Thyroid gland (tissue), 4 donors: ENCODE measurements at regions of chr15 and their contacts with region 1.

Region 1: GRCh38 chr15:59917504-59918157 is 86.5 kb upstream of the FOXB1 start:
- DNase-seq: peak; percentile 73 to 77
- H3K4me3 ChIP-seq: no peak overlapping the region
- H3K27ac ChIP-seq: no peak overlapping the region
- H3K4me1 ChIP-seq: no peaks in the 10 kb centered on the region
- H3K27me3 ChIP-seq: no peaks in the 10 kb centered on the region
- CTCF ChIP-seq: peak in 4 of 6 experiments; percentile 56 to 70 (median 63)
- POLR2A ChIP-seq: no peak

Region 2: GRCh38 chr15:59792359-59792758 is 125.3 kb before region 1 on chr15:
- intact Hi-C with region 1: no loop called
- DNase-seq: no peak
- H3K4me3 ChIP-seq: no peak overlapping the region
- H3K27ac ChIP-seq: no peak overlapping the region
- H3K4me1 ChIP-seq: no peaks in the 10 kb centered on the region
- H3K27me3 ChIP-seq: no peaks in the 10 kb centered on the region
- CTCF ChIP-seq: no peak
- POLR2A ChIP-seq: no peak

Region 3: GRCh38 chr15:60179786-60180391 is 262.3 kb after region 1 on chr15:
- intact Hi-C with region 1: loop called (anchors 5 kb)
- DNase-seq: peak; percentile 32 to 35
- H3K4me3 ChIP-seq: no peak overlapping the region
- H3K27ac ChIP-seq: no peak overlapping the region
- H3K4me1 ChIP-seq: peaks cover 3 to 5% of the 10 kb centered on the region in 2 donors
- H3K27me3 ChIP-seq: no peaks in the 10 kb centered on the region
- CTCF ChIP-seq: peak; percentile 57 to 84 (median 76)
- POLR2A ChIP-seq: no peak

Region 4: DNA sequence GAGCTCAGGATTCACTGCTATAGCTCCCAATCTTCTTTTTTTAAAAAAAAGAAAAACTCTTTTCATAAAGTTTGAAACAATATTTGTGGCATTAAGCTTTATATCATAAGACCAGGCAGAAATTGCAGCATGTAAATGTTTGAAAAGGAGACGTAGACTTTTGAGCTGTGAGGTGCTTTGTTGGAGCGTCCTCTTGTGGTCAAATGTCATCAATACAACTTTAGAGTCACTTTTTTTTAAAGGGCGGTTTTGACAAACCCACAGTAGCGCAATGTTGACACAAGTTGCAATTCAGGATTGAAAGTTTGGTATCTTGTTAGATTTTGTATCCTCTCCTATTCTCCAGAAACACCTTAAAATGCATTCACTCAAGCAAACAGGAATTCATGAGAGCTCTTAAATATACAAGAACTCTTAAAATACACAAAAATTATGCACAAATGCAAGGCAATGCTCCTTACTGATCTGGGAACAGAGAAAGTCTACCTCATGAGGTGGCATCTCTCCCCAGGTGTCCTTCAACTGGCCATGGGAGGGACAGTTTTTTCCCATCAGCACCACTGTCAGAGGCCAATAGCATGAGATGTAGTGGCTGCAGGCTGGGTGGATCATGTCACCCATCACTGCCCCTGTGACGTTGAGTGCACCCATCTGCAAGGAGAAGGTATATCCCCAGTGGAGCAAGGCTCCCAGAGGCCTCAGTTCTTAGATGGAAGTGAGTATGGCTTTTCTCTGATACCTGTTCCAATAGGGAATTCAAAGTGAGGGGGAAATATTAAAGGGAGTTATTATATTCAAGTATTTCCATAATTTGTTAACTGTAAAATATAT is 409.4 kb after region 1 on chr15:
- intact Hi-C with region 1: loop called (anchors 5 kb)
- DNase-seq: peak in 1 of 2 donors; percentile 11
- H3K4me3 ChIP-seq: no peak overlapping the region
- H3K27ac ChIP-seq: no peak overlapping the region
- H3K4me1 ChIP-seq: no peaks in the 10 kb centered on the region
- H3K27me3 ChIP-seq: no peaks in the 10 kb centered on the region
- CTCF ChIP-seq: peak; percentile 74 to 94 (median 84)
- POLR2A ChIP-seq: no peak